Heart right ventricle (tissue), 16 donors: ENCODE measurements at regions of chr18 and their contacts with region 1.

Region 1: GRCh38 chr18:2497797-2498196 is 73.5 kb downstream of the METTL4 start:
- DNase-seq: no peak
- ATAC-seq: no peak
- H3K4me3 ChIP-seq: no peak overlapping the region
- H3K27ac ChIP-seq: no peak overlapping the region
- H3K4me1 ChIP-seq: no peaks in the 10 kb centered on the region
- H3K27me3 ChIP-seq: no peaks in the 10 kb centered on the region
- CTCF ChIP-seq: no peak

Region 2: GRCh38 chr18:2485983-2486382 is 11.8 kb before region 1 on chr18:
- intact Hi-C with region 1: loop called in 1 of 10 experiments (anchors 2 kb)
- DNase-seq: no peak
- ATAC-seq: no peak
- H3K4me3 ChIP-seq: no peak overlapping the region
- H3K27ac ChIP-seq: no peak overlapping the region
- H3K4me1 ChIP-seq: no peaks in the 10 kb centered on the region
- H3K27me3 ChIP-seq: no peaks in the 10 kb centered on the region
- CTCF ChIP-seq: no peak

Region 3: GRCh38 chr18:2627821-2628276 is 130.1 kb after region 1 on chr18:
- intact Hi-C with region 1: no loop called
- DNase-seq: no peak
- ATAC-seq: no peak
- H3K4me3 ChIP-seq: no peak overlapping the region
- H3K27ac ChIP-seq: peak overlapping the region in 1 of 10 donors; percentile 28
- H3K4me1 ChIP-seq: no peaks in the 10 kb centered on the region
- H3K27me3 ChIP-seq: no peaks in the 10 kb centered on the region
- CTCF ChIP-seq: no peak